Adrenal gland (tissue), 19 donors: ENCODE measurements at regions of chr11 and their contacts with region 1.

Region 1: GRCh38 chr11:126440792-126441514 is 85.5 kb downstream of the ST3GAL4 start:
- DNase-seq: peak; percentile 60 to 92 (median 83)
- H3K4me3 ChIP-seq: no peak overlapping the region
- H3K27ac ChIP-seq: no peak overlapping the region
- H3K4me1 ChIP-seq: peaks cover 0 to 8% of the 10 kb centered on the region in 2 donors
- H3K27me3 ChIP-seq: no peaks in the 10 kb centered on the region
- CTCF ChIP-seq: peak; percentile 96 to 99 (median 98)
- POLR2A ChIP-seq: no peak

Region 2: DNA sequence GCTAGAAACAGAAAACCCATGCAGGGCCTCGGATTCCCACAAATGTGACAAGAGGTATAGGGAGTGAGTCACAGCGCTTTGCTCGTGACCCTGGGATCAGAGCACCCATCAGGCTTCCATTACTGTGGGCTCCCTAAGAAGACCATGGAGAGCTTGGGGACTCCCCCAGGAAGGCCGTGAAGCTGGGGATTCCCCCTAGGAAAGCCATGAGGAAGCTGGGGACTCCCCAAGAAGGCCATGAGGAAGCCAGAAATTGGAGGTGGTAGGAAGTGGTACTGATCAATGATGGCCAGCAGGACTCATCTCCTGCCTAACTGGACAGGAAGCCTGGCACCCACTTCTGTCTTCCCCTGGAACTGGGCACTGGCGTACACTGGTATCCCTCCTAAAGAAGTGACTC is 147.2 kb before region 1 on chr11:
- intact Hi-C with region 1: no loop called
- DNase-seq: no peak
- H3K4me3 ChIP-seq: no peak overlapping the region
- H3K27ac ChIP-seq: no peak overlapping the region
- H3K4me1 ChIP-seq: no peaks in the 10 kb centered on the region
- H3K27me3 ChIP-seq: no peaks in the 10 kb centered on the region
- CTCF ChIP-seq: no peak
- POLR2A ChIP-seq: no peak

Region 3: DNA sequence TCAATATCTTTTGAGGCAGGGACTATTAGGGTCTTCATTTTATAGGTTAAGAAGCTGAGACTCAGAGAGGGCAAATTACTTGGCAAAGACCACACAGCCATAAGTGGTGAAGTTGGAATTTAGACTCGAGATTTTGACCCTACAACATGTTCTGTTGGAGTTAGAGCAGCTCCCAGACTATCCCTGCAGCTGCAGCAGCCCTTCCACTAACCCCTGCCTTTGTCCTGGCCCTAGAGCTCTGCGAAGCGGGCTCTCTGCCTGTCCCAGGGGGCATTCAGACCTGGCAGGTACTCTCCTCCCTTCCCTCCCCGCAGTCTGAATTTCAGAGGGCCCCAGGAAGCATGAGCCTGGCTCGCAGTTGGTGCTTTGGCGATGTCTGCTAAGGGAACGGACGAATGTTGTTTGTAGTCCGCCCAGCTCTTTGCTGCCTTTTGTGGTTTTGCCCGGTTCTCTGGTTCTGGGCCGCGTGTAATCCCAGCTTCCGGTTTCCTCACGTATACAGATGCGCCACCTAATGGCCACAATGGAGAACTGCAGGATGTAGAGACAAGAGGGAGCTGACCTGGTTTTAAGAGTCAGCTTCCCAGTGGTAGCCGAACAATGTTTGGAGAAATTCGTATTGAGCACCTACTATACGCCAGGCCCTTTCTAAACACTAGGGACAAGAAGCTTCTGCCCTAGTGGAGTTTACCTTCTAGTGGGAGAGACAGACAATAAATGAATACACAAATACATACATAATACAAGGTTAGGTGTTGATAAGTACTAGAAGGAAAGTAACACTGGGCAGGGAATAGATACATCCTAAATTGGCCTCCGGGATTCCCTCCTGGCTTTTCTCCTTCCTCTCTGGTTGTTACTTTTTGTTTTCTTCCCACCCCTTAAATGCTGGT is 39.7 kb after region 1 on chr11:
- intact Hi-C with region 1: loop called (anchors 2 to 5 kb)
- DNase-seq: peak; percentile 80 to 97 (median 91)
- H3K4me3 ChIP-seq: no peak overlapping the region
- H3K27ac ChIP-seq: peak overlapping the region in 2 of 5 donors; percentile 66 to 68
- H3K4me1 ChIP-seq: peaks cover 6% of the 10 kb centered on the region in 2 donors
- H3K27me3 ChIP-seq: no peaks in the 10 kb centered on the region
- CTCF ChIP-seq: peak; percentile 93 to 99 (median 96)
- POLR2A ChIP-seq: peak in 1 of 2 donors; percentile 18

Region 4: DNA sequence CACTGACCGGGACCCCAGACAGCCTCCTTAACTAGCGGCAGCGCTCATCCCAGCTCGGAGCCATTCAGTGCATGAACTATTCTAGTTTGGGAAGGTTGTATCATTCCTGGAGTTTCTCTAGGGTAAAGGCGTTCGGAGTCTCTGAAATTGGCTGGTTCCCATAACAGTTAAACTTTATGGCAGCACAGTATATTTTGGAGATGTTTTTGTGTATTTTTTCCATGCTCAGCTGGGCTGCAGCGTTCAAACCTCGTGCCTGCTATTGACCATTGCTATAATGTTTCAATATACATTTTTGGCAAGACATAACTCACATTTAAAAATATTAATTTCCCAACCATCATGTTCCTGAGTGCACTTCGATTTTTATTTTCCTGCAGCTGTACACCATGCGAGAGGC is 84.3 kb after region 1 on chr11:
- intact Hi-C with region 1: no loop called
- DNase-seq: no peak
- H3K4me3 ChIP-seq: no peak overlapping the region
- H3K27ac ChIP-seq: no peak overlapping the region
- H3K4me1 ChIP-seq: no peaks in the 10 kb centered on the region
- H3K27me3 ChIP-seq: no peaks in the 10 kb centered on the region
- CTCF ChIP-seq: no peak
- POLR2A ChIP-seq: no peak

Region 5: DNA sequence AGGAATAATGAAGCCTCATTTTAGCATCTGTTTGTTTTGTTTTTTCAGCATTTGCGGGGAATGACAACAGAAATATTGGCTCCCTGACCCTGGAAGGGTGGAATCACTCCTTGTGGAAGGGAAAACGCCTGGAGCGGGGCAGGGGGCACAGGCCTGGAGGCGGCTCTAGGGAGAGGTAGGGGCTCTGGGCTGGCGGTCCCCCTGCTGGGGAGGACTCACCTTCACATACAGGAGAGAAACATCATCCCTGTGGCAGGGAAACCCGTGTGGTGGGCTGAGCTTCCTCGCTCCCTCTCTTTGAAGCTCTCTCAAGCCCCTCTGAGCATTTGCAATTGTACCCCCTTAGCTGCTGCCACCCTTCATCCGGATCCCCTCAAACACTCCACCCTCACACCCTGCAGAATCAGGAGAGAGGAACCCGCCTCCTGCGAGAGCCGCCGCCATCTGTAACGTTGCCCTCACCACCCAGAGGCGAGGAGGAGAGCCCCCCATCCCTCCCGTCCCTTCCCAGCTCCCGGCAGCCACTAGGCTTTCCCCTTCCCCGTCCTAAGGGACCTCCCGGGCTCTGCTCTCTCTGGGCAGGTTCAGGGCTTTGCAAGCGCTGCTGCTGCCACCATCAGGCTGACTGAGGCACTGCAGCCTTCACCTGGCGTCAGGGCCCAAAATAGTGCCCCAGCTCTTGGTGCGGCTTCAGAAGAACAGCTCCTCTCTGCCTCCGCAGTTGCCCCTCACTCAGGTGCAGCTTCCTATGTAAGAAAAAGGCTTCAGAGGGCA is 549.2 kb after region 1 on chr11:
- intact Hi-C with region 1: loop called in 1 of 2 experiments (anchors 5 kb)
- DNase-seq: peak; percentile 44 to 87 (median 69)
- H3K4me3 ChIP-seq: no peak overlapping the region
- H3K27ac ChIP-seq: no peak overlapping the region
- H3K4me1 ChIP-seq: no peaks in the 10 kb centered on the region
- H3K27me3 ChIP-seq: peaks cover 12% of the 10 kb centered on the region
- CTCF ChIP-seq: peak; percentile 75 to 94 (median 87)
- POLR2A ChIP-seq: no peak

Region 6: GRCh38 chr11:127345819-127346459 is 905.0 kb after region 1 on chr11:
- intact Hi-C with region 1: loop called in 1 of 2 experiments (anchors 5 kb)
- DNase-seq: peak in 6 of 7 donors; percentile 18 to 67 (median 35)
- H3K4me3 ChIP-seq: no peak overlapping the region
- H3K27ac ChIP-seq: no peak overlapping the region
- H3K4me1 ChIP-seq: no peaks in the 10 kb centered on the region
- H3K27me3 ChIP-seq: no peaks in the 10 kb centered on the region
- CTCF ChIP-seq: peak; percentile 37 to 70 (median 57)
- POLR2A ChIP-seq: no peak